CD8-positive, alpha-beta memory T cell (primary cell): ENCODE measurements at regions of chr1 and their contacts with region 1.

Region 1: GRCh38 chr1:167627865-167628641 is 2.0 kb upstream of the RCSD1 start:
- DNase-seq: peak; percentile 60 to 85 (median 77)
- H3K4me3 ChIP-seq: peak overlapping the region; percentile 60
- H3K4me3 Mint-ChIP-seq: peak overlapping the region; percentile 94 to 98 (median 96)
- H3K27ac ChIP-seq: peak overlapping the region; percentile 86
- H3K27ac Mint-ChIP-seq: peak overlapping the region; percentile 94 to 100 (median 98)
- H3K4me1 ChIP-seq: peaks cover 53% of the 10 kb centered on the region
- H3K4me1 Mint-ChIP-seq: peaks cover 61 to 68% (median 65%) of the 10 kb centered on the region in 3 donors
- H3K27me3 ChIP-seq: no peaks in the 10 kb centered on the region
- H3K27me3 Mint-ChIP-seq: peaks cover 0 to 5% of the 10 kb centered on the region in 2 donors

Region 2: DNA sequence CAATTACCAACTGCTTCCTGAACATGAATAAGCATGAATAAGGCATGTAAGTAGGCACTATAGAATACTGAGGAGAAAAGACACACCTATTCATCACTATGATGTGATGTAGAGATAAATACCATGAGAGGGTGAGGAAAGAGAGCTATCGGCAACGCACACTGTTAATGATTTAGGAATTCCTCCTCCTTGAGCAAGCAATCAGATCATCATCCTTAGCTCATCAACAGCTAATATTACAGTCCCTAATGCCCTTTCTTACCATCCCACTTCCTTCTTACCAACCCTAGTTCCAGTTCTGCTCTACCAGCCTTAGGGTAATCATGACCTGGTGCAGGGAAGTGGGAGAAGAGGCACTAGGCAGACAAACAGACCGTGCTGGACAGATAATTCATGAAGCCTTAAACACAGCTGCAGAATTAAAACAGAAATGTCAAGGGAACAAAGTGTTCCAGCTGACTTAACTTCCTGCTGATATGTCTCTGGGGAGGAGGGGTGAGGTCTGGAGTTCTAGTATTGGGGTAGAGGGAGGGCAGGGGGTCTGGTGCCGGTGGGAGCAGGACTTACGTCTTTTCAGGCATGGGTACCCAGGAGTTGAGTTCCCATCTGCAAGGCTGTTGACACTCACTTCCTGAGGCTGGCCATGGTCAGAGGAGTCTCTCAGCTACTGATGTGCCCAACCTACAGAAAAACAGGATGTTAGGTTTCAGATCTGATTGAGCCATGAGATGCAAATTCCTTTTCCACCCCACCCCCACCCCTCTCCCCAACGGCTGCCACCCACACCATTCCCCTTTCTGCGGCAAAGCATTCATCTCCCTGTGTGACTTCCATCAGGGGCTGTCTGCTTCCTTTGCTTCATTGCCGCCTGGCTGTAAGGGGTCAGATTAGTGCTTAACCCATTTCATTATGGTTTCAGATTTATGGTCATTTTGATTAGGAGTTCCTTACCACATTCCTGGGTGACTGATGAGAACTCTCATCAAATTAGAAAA is 10.6 kb before region 1 on chr1:
- CTCF ChIA-PET with region 1: interaction called, 8 read pairs
- POLR2A ChIA-PET with region 1: interaction called, 23 read pairs
- DNase-seq: peak in 1 of 5 donors; percentile 18
- H3K4me3 ChIP-seq: peak overlapping the region; percentile 39
- H3K4me3 Mint-ChIP-seq: peak overlapping the region in 6 of 7 donors; percentile 70 to 80 (median 76)
- H3K27ac ChIP-seq: peak overlapping the region; percentile 32
- H3K27ac Mint-ChIP-seq: peak overlapping the region; percentile 37 to 94 (median 89)
- H3K4me1 ChIP-seq: peaks cover 38% of the 10 kb centered on the region
- H3K4me1 Mint-ChIP-seq: peaks cover 39 to 78% (median 50%) of the 10 kb centered on the region in 3 donors
- H3K27me3 ChIP-seq: no peaks in the 10 kb centered on the region
- H3K27me3 Mint-ChIP-seq: no peaks in the 10 kb centered on the region